WTC11 (cell line): ENCODE measurements at regions of chr11 and their contacts with region 1.

Region 1: GRCh38 chr11:68342459-68343158 is 30.2 kb downstream of the LRP5 start:
- DNase-seq: peak; percentile 74
- ATAC-seq: peak; percentile 76
- H3K4me3 Mint-ChIP-seq: no peak overlapping the region
- H3K27ac Mint-ChIP-seq: peak overlapping the region; percentile 89
- H3K4me1 Mint-ChIP-seq: peaks cover 58% of the 10 kb centered on the region
- H3K27me3 Mint-ChIP-seq: no peaks in the 10 kb centered on the region
- CTCF ChIP-seq: no peak

Region 2: DNA sequence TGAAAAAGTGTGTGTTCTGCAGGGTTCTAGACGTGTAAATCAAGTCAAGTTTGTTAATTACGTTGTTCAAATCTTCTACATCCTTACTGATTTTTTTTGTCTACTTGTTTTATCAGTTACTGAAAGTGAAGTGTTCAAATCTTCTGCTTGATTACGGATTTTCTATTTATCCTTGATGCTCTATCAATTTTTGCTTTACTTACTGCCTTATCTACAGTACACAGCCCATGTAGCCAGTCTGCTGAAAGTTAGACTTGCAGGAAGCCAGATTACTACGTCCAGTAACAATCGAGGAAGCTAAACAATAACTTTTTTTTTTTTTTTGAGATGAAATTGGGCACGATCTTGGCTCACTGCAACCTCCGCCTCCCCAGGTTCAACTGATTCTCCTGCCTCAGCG is 55.2 kb before region 1 on chr11:
- CTCF ChIA-PET with region 1: no interaction called
- POLR2A ChIA-PET with region 1: no interaction called
- DNase-seq: no peak
- ATAC-seq: no peak
- H3K4me3 Mint-ChIP-seq: no peak overlapping the region
- H3K27ac Mint-ChIP-seq: no peak overlapping the region
- H3K4me1 Mint-ChIP-seq: no peaks in the 10 kb centered on the region
- H3K27me3 Mint-ChIP-seq: peaks cover 14% of the 10 kb centered on the region
- CTCF ChIP-seq: no peak

Region 3: GRCh38 chr11:68321293-68322041 is 21.1 kb before region 1 on chr11:
- CTCF ChIA-PET with region 1: interaction called, 29 read pairs
- POLR2A ChIA-PET with region 1: no interaction called
- DNase-seq: no peak
- ATAC-seq: no peak
- H3K4me3 Mint-ChIP-seq: no peak overlapping the region
- H3K27ac Mint-ChIP-seq: no peak overlapping the region
- H3K4me1 Mint-ChIP-seq: peaks cover 33% of the 10 kb centered on the region
- H3K27me3 Mint-ChIP-seq: no peaks in the 10 kb centered on the region
- CTCF ChIP-seq: no peak

Region 4: GRCh38 chr11:68331338-68331947 is 11.2 kb before region 1 on chr11:
- CTCF ChIA-PET with region 1: interaction called, 29 read pairs
- POLR2A ChIA-PET with region 1: no interaction called
- DNase-seq: no peak
- ATAC-seq: peak; percentile 10
- H3K4me3 Mint-ChIP-seq: no peak overlapping the region
- H3K27ac Mint-ChIP-seq: peak overlapping the region; percentile 94
- H3K4me1 Mint-ChIP-seq: peaks cover 66% of the 10 kb centered on the region
- H3K27me3 Mint-ChIP-seq: no peaks in the 10 kb centered on the region
- CTCF ChIP-seq: no peak